Aorta (tissue), 5 donors: ENCODE measurements at regions of chr18 and their contacts with region 1.

Region 1: DNA sequence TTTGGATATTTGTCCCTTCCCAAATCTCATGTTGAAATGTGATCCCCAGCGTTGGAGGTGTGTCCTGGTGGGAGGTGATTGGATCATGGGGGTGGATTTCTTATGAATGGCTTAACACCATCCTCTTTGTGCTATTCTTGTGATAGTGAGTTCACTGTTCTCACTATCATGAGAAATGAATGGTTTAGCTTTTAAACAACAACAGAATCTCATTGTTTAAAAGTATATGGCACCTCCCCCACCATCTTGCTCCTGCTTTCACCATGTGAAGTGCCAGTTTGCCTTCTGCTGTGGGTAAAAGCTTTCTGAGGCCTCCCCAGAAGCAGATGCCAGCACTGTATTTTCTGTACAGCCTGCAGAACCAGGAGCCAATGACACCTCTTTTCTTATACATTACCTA is 38.1 kb downstream of the KIAA1328 start:
- DNase-seq: no peak
- ATAC-seq: no peak
- H3K4me3 ChIP-seq: no peak overlapping the region
- H3K27ac ChIP-seq: no peak overlapping the region
- H3K4me1 ChIP-seq: no peaks in the 10 kb centered on the region
- H3K27me3 ChIP-seq: no peaks in the 10 kb centered on the region

Region 2: DNA sequence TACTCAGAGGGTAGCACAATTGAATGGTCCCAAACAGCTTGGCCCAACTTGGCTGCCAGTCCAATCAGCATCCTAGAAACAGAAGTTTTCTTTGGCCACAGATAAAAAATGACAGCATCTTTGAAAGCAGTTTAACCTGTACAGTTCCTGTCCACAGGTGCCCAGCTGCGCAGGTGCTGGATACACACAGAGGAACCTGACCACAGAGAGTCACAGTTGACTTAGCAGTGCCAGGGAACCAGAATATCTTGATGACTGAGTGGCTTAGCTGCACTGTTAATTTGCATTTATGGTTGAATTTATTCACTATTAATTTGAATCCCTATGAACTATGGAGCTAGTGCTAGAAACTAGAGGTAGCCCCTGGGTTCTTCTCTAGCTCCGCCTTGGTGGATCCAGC is 131.9 kb before region 1 on chr18:
- intact Hi-C with region 1: no loop called
- DNase-seq: no peak
- ATAC-seq: no peak
- H3K4me3 ChIP-seq: no peak overlapping the region
- H3K27ac ChIP-seq: no peak overlapping the region
- H3K4me1 ChIP-seq: no peaks in the 10 kb centered on the region
- H3K27me3 ChIP-seq: no peaks in the 10 kb centered on the region

Region 3: GRCh38 chr18:36769611-36770314 is 97.3 kb before region 1 on chr18:
- intact Hi-C with region 1: no loop called
- DNase-seq: no peak
- ATAC-seq: no peak
- H3K4me3 ChIP-seq: no peak overlapping the region
- H3K27ac ChIP-seq: no peak overlapping the region
- H3K4me1 ChIP-seq: no peaks in the 10 kb centered on the region
- H3K27me3 ChIP-seq: no peaks in the 10 kb centered on the region

Region 4: GRCh38 chr18:36912887-36913286 is 45.8 kb after region 1 on chr18:
- intact Hi-C with region 1: loop called in 1 of 2 experiments (anchors 10 kb)
- DNase-seq: no peak
- ATAC-seq: no peak
- H3K4me3 ChIP-seq: no peak overlapping the region
- H3K27ac ChIP-seq: no peak overlapping the region
- H3K4me1 ChIP-seq: no peaks in the 10 kb centered on the region
- H3K27me3 ChIP-seq: no peaks in the 10 kb centered on the region